HEK293T (cell line): ENCODE measurements at regions of chr15 and their contacts with region 1.

Region 1: GRCh38 chr15:60408438-60409105 is 10.8 kb upstream of the ANXA2 start:
- DNase-seq: no peak

Region 2: DNA sequence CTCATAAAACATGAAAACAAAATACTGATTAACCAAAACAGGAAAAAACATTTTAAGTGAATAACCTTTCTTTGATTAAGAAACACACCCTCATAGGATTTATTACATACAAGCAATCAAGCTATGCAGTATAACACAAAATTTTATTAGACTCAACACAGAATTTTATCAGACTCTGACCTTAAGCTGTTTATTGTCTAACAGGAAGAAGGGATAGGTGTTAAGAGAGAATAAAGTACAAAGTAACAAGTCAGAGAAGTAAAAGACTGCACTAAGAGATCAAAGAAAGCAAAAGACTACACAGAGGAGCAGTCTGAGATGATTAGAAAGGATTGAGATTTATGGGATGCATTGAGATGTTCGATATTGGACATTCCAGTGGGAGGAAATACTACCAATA is 32.8 kb after region 1 on chr15:
- CTCF ChIA-PET with region 1: interaction called, 10 read pairs
- POLR2A ChIA-PET with region 1: no interaction called
- DNase-seq: no peak